Activated CD4-positive, alpha-beta memory T cell treated with anti-CD3 and anti-CD28 coated beads for 36 hours (primary cell): ENCODE measurements at regions of chr9 and their contacts with region 1.

Region 1: GRCh38 chr9:31119882-31120454 is 1264.5 kb upstream of the ACO1 start:
- DNase-seq: peak; percentile 39
- H3K4me3 Mint-ChIP-seq: no peak overlapping the region
- H3K27ac Mint-ChIP-seq: no peak overlapping the region
- H3K4me1 Mint-ChIP-seq: peaks cover 5% of the 10 kb centered on the region
- H3K27me3 Mint-ChIP-seq: no peaks in the 10 kb centered on the region

Region 2: GRCh38 chr9:30534896-30535295 is 585.1 kb before region 1 on chr9:
- CTCF ChIA-PET with region 1: no interaction called
- POLR2A ChIA-PET with region 1: no interaction called
- intact Hi-C with region 1: no loop called
- DNase-seq: no peak
- H3K4me3 Mint-ChIP-seq: no peak overlapping the region
- H3K27ac Mint-ChIP-seq: no peak overlapping the region
- H3K4me1 Mint-ChIP-seq: no peaks in the 10 kb centered on the region
- H3K27me3 Mint-ChIP-seq: no peaks in the 10 kb centered on the region

Region 3: DNA sequence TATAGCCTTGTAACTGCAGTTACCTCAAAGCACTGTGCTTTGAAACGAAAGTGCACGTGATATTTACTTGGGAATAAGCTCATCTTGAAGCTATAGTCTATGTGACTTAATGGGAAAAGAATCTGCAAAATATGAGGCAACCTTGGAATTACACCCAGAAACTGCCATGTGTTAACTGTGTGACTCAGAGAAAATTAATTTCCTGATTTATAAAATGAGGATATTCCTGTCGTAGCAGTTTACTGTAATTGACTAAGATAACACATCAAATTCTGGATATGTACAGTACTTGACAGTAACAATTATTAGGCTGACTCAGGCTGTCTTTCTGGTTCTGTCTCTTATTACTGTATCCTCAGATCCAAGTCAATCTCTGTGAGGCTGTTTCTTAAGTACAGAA is 184.6 kb after region 1 on chr9:
- CTCF ChIA-PET with region 1: interaction called, 3 read pairs
- POLR2A ChIA-PET with region 1: no interaction called
- intact Hi-C with region 1: loop called (anchors 10 kb)
- DNase-seq: no peak
- H3K4me3 Mint-ChIP-seq: no peak overlapping the region
- H3K27ac Mint-ChIP-seq: no peak overlapping the region
- H3K4me1 Mint-ChIP-seq: peaks cover 23% of the 10 kb centered on the region
- H3K27me3 Mint-ChIP-seq: no peaks in the 10 kb centered on the region

Region 4: DNA sequence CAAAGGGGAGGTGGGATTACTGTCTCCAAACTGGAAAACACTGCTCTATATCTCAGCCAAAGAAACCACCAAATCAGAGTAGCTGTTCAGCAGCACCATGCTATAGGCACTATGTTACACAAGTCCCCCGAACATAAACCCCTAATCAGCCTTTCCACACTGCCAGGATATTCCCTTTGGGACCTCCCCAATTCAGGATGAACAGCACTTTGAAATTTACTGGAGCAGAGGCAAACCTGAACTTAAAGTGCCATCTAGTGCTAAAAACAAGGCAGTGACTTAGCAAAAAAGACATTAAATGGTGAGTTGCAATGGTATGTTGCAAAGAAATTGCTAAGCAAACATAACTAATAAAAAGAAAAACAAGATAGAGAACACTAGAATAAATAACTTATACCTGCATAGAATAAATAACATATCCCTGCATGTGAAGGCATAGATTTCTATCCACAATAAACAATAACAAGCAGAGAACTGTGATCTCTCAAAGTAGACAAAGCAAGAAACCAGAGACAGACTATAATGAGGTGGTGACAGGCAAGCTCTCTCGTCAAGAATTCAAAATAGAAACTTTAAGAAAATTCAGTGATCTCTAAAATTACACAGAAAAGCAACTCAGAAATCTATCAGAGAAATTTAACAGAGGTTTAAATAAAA is 680.1 kb after region 1 on chr9:
- CTCF ChIA-PET with region 1: interaction called, 12 read pairs
- POLR2A ChIA-PET with region 1: no interaction called
- intact Hi-C with region 1: loop called (anchors 1 kb)
- DNase-seq: no peak
- H3K4me3 Mint-ChIP-seq: no peak overlapping the region
- H3K27ac Mint-ChIP-seq: no peak overlapping the region
- H3K4me1 Mint-ChIP-seq: peaks cover 14% of the 10 kb centered on the region
- H3K27me3 Mint-ChIP-seq: no peaks in the 10 kb centered on the region

Region 5: DNA sequence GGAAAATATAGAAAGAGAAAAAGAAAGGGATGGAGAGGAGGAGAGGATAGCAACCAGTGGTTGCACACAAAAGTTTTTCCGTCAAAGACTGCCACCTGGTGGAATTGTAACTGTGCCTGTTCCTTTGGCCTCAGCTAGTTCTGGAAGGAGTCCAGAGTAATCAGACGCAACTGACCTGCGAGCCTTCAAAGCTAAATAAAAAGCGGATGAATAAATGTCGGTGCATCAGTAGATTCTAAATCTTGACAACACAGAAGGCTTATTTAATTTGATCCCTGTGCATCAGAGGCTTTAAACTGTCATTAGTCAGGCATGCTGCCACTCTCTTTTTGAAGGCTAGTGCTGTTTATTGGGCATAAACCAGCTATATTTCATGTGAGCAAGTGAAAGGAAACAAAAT is 1131.6 kb after region 1 on chr9:
- CTCF ChIA-PET with region 1: interaction called, 7 read pairs
- POLR2A ChIA-PET with region 1: no interaction called
- intact Hi-C with region 1: loop called (anchors 5 kb)
- DNase-seq: peak; percentile 35
- H3K4me3 Mint-ChIP-seq: no peak overlapping the region
- H3K27ac Mint-ChIP-seq: no peak overlapping the region
- H3K4me1 Mint-ChIP-seq: no peaks in the 10 kb centered on the region
- H3K27me3 Mint-ChIP-seq: peaks cover 2% of the 10 kb centered on the region